Body of pancreas (tissue), 4 donors: ENCODE measurements at regions of chr1 and their contacts with region 1.

Region 1: DNA sequence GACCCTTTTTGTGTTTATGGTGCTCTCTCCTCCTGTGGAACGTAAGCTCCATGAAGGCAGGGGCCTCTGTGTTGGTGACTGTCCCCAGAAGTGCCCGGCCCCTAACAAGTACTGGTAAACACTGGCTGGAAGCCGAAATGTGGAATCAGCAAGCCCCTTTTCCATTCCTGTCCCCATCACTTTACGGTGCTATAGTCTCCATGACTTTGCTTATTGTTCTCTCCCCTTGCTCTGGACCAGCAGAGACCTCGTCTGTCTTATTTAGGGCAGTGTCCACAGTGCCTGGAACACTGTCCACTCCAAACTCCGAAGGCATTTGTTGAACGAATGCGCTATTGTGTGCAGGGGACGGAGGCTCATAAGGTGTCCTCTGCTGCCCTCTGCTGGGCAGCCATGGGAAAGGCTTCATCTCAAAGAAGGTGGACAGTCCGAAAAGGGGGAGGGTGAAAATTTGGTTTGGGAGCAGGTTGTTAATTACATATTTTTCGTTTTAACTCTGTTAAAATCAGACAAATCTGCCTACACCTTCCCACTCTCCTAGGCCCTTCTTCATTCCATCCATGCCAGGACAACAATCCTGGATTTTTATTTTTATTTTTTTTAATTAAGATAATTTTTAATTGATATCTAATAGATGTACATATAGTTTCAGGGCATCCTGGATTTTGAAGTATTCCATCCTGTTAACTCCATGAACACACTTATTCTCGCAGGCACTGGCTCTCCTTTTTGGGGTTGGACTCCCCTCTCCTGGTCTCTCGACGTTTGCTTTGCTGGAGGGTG is 115.6 kb downstream of the PGBD5 start:
- DNase-seq: peak; percentile 80 to 87 (median 82)
- ATAC-seq: peak; percentile 89
- H3K4me3 ChIP-seq: no peak overlapping the region
- H3K27ac ChIP-seq: no peak overlapping the region
- H3K4me1 ChIP-seq: peaks cover 8% of the 10 kb centered on the region
- H3K27me3 ChIP-seq: no peaks in the 10 kb centered on the region
- CTCF ChIP-seq: peak; percentile 73 to 95 (median 93)
- POLR2A ChIP-seq: no peak

Region 2: DNA sequence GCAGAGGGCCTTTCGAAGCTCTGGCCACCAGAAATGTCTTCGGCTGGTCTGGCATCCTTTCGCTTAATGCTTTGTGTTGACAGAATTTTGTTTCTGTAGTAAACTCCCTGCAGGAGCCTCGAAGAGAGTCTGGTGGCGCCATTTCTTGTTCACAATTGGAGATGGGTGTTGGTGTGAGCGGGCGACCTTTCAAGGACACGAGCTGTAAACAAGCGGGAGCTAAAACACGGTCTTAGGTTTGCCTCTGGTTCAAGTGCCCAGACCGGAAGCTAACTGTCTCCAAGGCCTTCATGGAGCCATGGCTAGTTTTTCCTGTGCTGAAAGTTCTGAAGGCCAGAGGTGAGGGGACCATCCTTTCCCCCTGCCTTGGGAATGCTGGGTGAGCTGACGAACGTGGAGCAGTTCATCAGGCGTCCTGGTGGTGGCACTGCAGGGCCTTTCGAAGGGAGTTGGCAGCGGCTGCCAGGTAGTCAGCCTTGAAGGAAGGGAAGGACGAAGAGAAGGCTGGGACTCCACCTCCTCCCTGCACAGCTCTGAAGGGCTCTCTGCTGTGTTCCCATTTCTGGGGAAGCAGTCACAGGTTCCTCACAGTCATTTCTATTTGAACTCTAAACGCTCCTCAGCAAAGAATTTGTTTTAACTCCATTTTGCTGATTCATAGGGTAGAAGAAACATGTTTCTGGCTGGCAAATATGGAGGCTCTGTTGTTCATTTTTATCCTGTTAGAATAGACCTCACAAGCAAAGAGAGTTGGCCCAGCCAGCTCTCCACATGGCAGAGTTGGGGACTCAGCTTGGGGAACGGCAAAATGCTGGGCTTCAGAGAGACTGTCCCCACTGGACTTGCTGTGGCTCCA is 649.3 kb before region 1 on chr1:
- intact Hi-C with region 1: loop called (anchors 5 kb)
- DNase-seq: peak; percentile 87 to 91 (median 88)
- ATAC-seq: peak; percentile 95
- H3K4me3 ChIP-seq: no peak overlapping the region
- H3K27ac ChIP-seq: no peak overlapping the region
- H3K4me1 ChIP-seq: no peaks in the 10 kb centered on the region
- H3K27me3 ChIP-seq: no peaks in the 10 kb centered on the region
- CTCF ChIP-seq: peak; percentile 65 to 95 (median 92)
- POLR2A ChIP-seq: no peak

Region 3: DNA sequence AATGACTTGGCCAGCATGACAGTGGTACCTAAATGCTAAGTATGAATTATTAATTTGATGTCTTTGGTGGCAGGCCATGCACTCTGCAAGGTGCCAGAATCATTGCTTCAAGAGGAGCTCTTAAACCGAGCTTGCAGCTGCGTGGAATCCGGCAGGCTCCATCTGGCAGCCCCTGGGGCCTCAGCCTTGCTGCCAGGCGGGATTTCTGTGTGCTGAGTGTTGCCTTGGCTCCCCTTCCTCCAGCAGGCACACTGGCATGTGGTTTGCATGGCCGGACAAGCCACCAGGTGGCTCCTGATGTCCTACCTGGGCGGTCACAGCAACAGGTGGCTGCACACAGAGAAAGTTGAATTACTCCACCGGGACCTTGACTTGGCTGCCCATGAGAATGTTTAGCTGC is 529.1 kb before region 1 on chr1:
- intact Hi-C with region 1: loop called (anchors 10 kb)
- DNase-seq: peak; percentile 86 to 91 (median 90)
- ATAC-seq: peak; percentile 96
- H3K4me3 ChIP-seq: no peak overlapping the region
- H3K27ac ChIP-seq: peak overlapping the region in 1 of 4 donors; percentile 34
- H3K4me1 ChIP-seq: peaks cover 23% of the 10 kb centered on the region
- H3K27me3 ChIP-seq: no peaks in the 10 kb centered on the region
- CTCF ChIP-seq: peak; percentile 60 to 92 (median 85)
- POLR2A ChIP-seq: no peak